Gastrocnemius medialis (tissue), 4 donors: ENCODE measurements at regions of chr12 and their contacts with region 1.

Region 1: GRCh38 chr12:64451687-64452558 is at the start of gene TBK1:
- DNase-seq: peak; percentile 77 to 91
- ATAC-seq: peak; percentile 97 to 98
- H3K4me3 ChIP-seq: peak within 1 kb of the TSS; percentile 80 to 99 (median 90)
- H3K27ac ChIP-seq: peak within 1 kb of the TSS; percentile 89 to 99 (median 95)
- H3K4me1 ChIP-seq: peaks cover 12 to 16% of the 10 kb centered on the region in 2 donors
- H3K27me3 ChIP-seq: no peaks in the 10 kb centered on the region
- CTCF ChIP-seq: peak in 4 of 5 experiments; percentile 9 to 34 (median 20)
- POLR2A ChIP-seq: peak; percentile 90 to 94
- total RNA-seq, gene TBK1: 20.1 to 40.8 (median 27.6) TPM

Region 2: GRCh38 chr12:64403707-64404469 is 48.0 kb before region 1 on chr12 and contains the start of gene XPOT:
- in situ Hi-C with region 1: no loop called
- intact Hi-C with region 1: loop called (anchors 2 kb)
- DNase-seq: peak; percentile 84 to 95
- ATAC-seq: peak; percentile 88 to 93
- H3K4me3 ChIP-seq: peak within 1 kb of the TSS; percentile 93 to 99 (median 98)
- H3K27ac ChIP-seq: peak within 1 kb of the TSS; percentile 100
- H3K4me1 ChIP-seq: peaks cover 10 to 12% of the 10 kb centered on the region in 2 donors
- H3K27me3 ChIP-seq: no peaks in the 10 kb centered on the region
- CTCF ChIP-seq: peak in 1 of 5 experiments; percentile 22
- POLR2A ChIP-seq: no peak
- total RNA-seq, gene XPOT: 21.1 to 27.1 (median 25.1) TPM

Region 3: GRCh38 chr12:64419696-64420095 is 32.2 kb before region 1 on chr12:
- in situ Hi-C with region 1: no loop called
- intact Hi-C with region 1: no loop called
- DNase-seq: no peak
- ATAC-seq: no peak
- H3K4me3 ChIP-seq: no peak overlapping the region
- H3K27ac ChIP-seq: no peak overlapping the region
- H3K4me1 ChIP-seq: no peaks in the 10 kb centered on the region
- H3K27me3 ChIP-seq: no peaks in the 10 kb centered on the region
- CTCF ChIP-seq: no peak
- POLR2A ChIP-seq: no peak

Region 4: DNA sequence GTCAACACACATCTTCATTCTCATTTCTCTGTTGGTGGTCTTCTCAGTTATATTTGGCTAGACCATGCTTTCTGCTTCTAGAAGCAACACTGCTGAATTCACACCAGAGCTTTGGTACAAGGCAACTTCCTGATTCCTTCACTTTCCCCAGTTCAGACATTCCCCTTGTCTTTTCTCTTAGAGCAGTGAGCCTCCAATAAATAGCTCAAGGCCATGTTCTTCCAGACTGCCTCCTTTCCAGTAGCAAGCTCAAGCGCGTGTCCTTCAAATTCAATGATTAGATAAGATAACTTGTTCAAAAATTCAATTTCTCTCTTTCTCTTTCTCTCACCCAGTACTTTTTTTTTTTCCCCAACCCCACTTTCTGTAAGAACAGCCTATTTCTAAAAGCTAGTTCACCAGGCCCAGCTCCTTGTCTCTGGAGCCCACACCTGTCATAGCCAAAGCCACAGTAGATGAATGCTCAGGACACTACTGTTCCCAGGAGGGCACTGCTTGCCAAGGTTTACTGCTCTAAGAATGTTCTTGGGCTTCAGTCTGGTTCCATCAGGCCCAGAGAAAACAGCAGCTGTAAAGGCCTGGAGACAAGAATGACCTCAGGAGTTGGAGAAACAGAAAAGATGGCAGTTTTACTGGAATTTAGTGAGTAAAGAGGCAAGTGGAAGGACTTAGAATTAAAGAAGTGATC is 17.7 kb after region 1 on chr12:
- in situ Hi-C with region 1: no loop called
- intact Hi-C with region 1: loop called (anchors 2 kb)
- DNase-seq: peak; percentile 42 to 70
- ATAC-seq: peak; percentile 87 to 96
- H3K4me3 ChIP-seq: no peak overlapping the region
- H3K27ac ChIP-seq: peak overlapping the region; percentile 75 to 82 (median 78)
- H3K4me1 ChIP-seq: peaks cover 27 to 30% of the 10 kb centered on the region in 2 donors
- H3K27me3 ChIP-seq: no peaks in the 10 kb centered on the region
- CTCF ChIP-seq: no peak
- POLR2A ChIP-seq: no peak

Region 5: DNA sequence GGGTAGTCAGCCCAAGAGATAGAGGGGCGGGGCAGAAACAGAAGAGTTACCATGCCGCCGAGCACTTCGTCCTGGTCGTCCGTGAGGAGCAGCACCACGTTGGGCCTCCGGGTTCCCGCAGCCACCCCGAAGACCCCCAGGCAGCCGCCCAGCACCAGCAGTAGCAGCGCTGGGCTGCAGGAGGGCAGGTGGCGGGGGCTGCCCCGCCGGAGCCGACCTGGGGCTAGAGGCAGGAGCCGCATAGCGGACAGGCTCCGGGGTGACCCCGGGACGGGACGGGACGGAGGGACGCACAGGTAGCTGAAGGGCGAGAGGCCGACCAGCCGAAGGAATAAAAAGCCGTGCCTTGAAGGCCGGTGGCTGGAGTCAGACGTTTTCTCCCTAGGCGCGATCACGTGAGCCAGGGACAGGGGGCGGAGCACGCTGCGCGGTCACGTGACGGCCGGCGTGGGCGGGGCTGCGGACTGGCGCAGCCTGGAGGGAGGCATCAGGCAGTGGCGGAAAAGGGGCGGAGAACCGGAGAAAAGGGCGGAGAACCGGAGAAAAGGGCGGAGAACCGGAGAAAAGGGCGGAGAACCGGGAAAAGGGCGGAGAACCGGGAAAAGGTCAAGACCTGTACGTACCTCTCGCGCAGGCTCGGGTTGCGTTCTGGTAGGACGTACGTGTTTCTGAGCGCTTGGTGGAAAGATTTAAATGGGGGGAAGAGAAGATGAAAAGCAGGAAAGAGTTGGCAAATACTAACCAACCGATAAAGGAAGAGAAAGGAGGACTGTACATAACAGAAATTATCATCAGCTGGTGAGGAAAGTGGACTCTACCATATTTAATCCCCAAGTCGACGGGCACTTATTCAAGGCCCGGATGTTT is 307.3 kb after region 1 on chr12 and contains the start of gene GNS:
- in situ Hi-C with region 1: no loop called
- intact Hi-C with region 1: loop called (anchors 5 kb)
- DNase-seq: peak; percentile 95
- ATAC-seq: peak; percentile 96
- H3K4me3 ChIP-seq: peak within 1 kb of the TSS; percentile 97 to 98 (median 97)
- H3K27ac ChIP-seq: peak within 1 kb of the TSS; percentile 90 to 93 (median 92)
- H3K4me1 ChIP-seq: peaks cover 12 to 19% of the 10 kb centered on the region in 2 donors
- H3K27me3 ChIP-seq: no peaks in the 10 kb centered on the region
- CTCF ChIP-seq: peak in 2 of 5 experiments; percentile 29 to 45
- POLR2A ChIP-seq: peak; percentile 36 to 70
- total RNA-seq, gene GNS: 41.9 to 56.5 (median 53.9) TPM